GM12878 (cell line): ENCODE measurements at regions of chr1 and their contacts with region 1.

Region 1: GRCh38 chr1:202135221-202135721 is 9.3 kb downstream of the ARL8A start:
- DNase-seq: no peak
- ATAC-seq: peak; percentile 97
- H3K4me3 ChIP-seq: no peak overlapping the region
- H3K27ac ChIP-seq: no peak overlapping the region
- H3K4me1 ChIP-seq: no peaks in the 10 kb centered on the region
- H3K27me3 ChIP-seq: no peaks in the 10 kb centered on the region
- CTCF ChIP-seq: peak; percentile 77 to 86 (median 84)
- EP300 ChIP-seq: no peak
- POLR2A ChIP-seq: no peak; the same call in 1 of the 2 replicates
- RAD21 ChIP-seq: peak; percentile 72

Region 2: GRCh38 chr1:201970334-201971159 is 164.7 kb before region 1 on chr1:
- CTCF ChIA-PET with region 1: interaction called, 13 read pairs
- POLR2A ChIA-PET with region 1: interaction called, 3 read pairs
- RAD21 ChIA-PET with region 1: no interaction called
- SMC1A ChIA-PET with region 1: no interaction called
- in situ Hi-C with region 1: no loop called
- intact Hi-C with region 1: no loop called
- DNase-seq: no peak
- ATAC-seq: no peak
- H3K4me3 ChIP-seq: no peak overlapping the region
- H3K27ac ChIP-seq: no peak overlapping the region
- H3K4me1 ChIP-seq: peaks cover 6% of the 10 kb centered on the region
- H3K27me3 ChIP-seq: no peaks in the 10 kb centered on the region
- CTCF ChIP-seq: no peak
- EP300 ChIP-seq: no peak
- POLR2A ChIP-seq: no peak
- RAD21 ChIP-seq: no peak

Region 3: GRCh38 chr1:202009326-202010179 is 125.7 kb before region 1 on chr1:
- CTCF ChIA-PET with region 1: interaction called, 44 read pairs
- POLR2A ChIA-PET with region 1: interaction called, 4 read pairs
- RAD21 ChIA-PET with region 1: interaction called, 10 read pairs
- SMC1A ChIA-PET with region 1: interaction called, 10 read pairs
- in situ Hi-C with region 1: no loop called
- intact Hi-C with region 1: loop called (anchors 1 kb)
- DNase-seq: peak; percentile 25
- ATAC-seq: peak; percentile 79
- H3K4me3 ChIP-seq: 0 out of 2 replicates have a peak overlapping the region, but pooled peaks have one; percentile 28
- H3K27ac ChIP-seq: no peak overlapping the region
- H3K4me1 ChIP-seq: peaks cover 11% of the 10 kb centered on the region
- H3K27me3 ChIP-seq: no peaks in the 10 kb centered on the region
- CTCF ChIP-seq: peak; percentile 79 to 91 (median 86)
- EP300 ChIP-seq: no peak
- POLR2A ChIP-seq: no peak
- RAD21 ChIP-seq: peak; percentile 84

Region 4: GRCh38 chr1:202122639-202123335 is 12.5 kb before region 1 on chr1 and contains the start of gene GPR37L1:
- CTCF ChIA-PET with region 1: interaction called, 29 read pairs
- POLR2A ChIA-PET with region 1: no interaction called
- RAD21 ChIA-PET with region 1: interaction called, 11 read pairs
- SMC1A ChIA-PET with region 1: interaction called, 6 read pairs
- in situ Hi-C with region 1: no loop called
- intact Hi-C with region 1: no loop called
- DNase-seq: no peak
- ATAC-seq: no peak
- H3K4me3 ChIP-seq: no peak within 1 kb of the TSS
- H3K27ac ChIP-seq: no peak within 1 kb of the TSS
- H3K4me1 ChIP-seq: no peaks in the 10 kb centered on the region
- H3K27me3 ChIP-seq: peaks cover 0 to 2% of the 10 kb centered on the region in 2 experiments
- CTCF ChIP-seq: no peak
- EP300 ChIP-seq: no peak
- POLR2A ChIP-seq: no peak
- RAD21 ChIP-seq: no peak
- polyA plus RNA-seq, gene GPR37L1: under 0.01 to 0.02 TPM

Region 5: GRCh38 chr1:202160377-202160940 is 25.2 kb after region 1 on chr1 and contains the start of gene PTPN7:
- CTCF ChIA-PET with region 1: interaction called, 20 read pairs
- POLR2A ChIA-PET with region 1: interaction called, 3 read pairs
- RAD21 ChIA-PET with region 1: interaction called, 4 read pairs
- SMC1A ChIA-PET with region 1: interaction called, 6 read pairs
- in situ Hi-C with region 1: no loop called
- intact Hi-C with region 1: no loop called
- DNase-seq: peak; percentile 48
- ATAC-seq: peak; percentile 67
- H3K4me3 ChIP-seq: peak within 1 kb of the TSS; percentile 85
- H3K27ac ChIP-seq: peak within 1 kb of the TSS; percentile 97
- H3K4me1 ChIP-seq: peaks cover 58% of the 10 kb centered on the region
- H3K27me3 ChIP-seq: no peaks in the 10 kb centered on the region
- CTCF ChIP-seq: peak; percentile 55 to 79 (median 66)
- EP300 ChIP-seq: no peak
- POLR2A ChIP-seq: peak; percentile 51
- RAD21 ChIP-seq: peak; percentile 42; the same call in 1 of the 2 replicates
- polyA plus RNA-seq, gene PTPN7: 7.9 to 14.2 TPM

Region 6: GRCh38 chr1:202291961-202292712 is 156.9 kb after region 1 on chr1:
- CTCF ChIA-PET with region 1: no interaction called
- POLR2A ChIA-PET with region 1: no interaction called
- RAD21 ChIA-PET with region 1: no interaction called
- SMC1A ChIA-PET with region 1: no interaction called
- in situ Hi-C with region 1: no loop called
- intact Hi-C with region 1: no loop called
- DNase-seq: no peak
- ATAC-seq: no peak
- H3K4me3 ChIP-seq: no peak overlapping the region
- H3K27ac ChIP-seq: no peak overlapping the region
- H3K4me1 ChIP-seq: peaks cover 5% of the 10 kb centered on the region; the same call in 1 of the 2 replicates
- H3K27me3 ChIP-seq: peaks cover 0 to 2% of the 10 kb centered on the region in 2 experiments; a peak in 2 of 4 replicates
- CTCF ChIP-seq: no peak
- EP300 ChIP-seq: no peak
- POLR2A ChIP-seq: no peak
- RAD21 ChIP-seq: no peak